GM12878 (cell line): ENCODE measurements at regions of chr2 and their contacts with region 1.

Region 1: GRCh38 chr2:222451224-222451674 is 26.9 kb downstream of the SGPP2 start:
- DNase-seq: peak; percentile 77
- ATAC-seq: peak; percentile 100
- H3K4me3 ChIP-seq: no peak overlapping the region
- H3K27ac ChIP-seq: no peak overlapping the region
- H3K4me1 ChIP-seq: peaks cover 9% of the 10 kb centered on the region
- H3K27me3 ChIP-seq: no peaks in the 10 kb centered on the region
- CTCF ChIP-seq: peak; percentile 23 to 57 (median 42); a peak in 5 of 6 replicates
- EP300 ChIP-seq: peak; percentile 62 to 66; a peak in 2 of 4 replicates
- POLR2A ChIP-seq: no peak
- RAD21 ChIP-seq: peak; percentile 54

Region 2: DNA sequence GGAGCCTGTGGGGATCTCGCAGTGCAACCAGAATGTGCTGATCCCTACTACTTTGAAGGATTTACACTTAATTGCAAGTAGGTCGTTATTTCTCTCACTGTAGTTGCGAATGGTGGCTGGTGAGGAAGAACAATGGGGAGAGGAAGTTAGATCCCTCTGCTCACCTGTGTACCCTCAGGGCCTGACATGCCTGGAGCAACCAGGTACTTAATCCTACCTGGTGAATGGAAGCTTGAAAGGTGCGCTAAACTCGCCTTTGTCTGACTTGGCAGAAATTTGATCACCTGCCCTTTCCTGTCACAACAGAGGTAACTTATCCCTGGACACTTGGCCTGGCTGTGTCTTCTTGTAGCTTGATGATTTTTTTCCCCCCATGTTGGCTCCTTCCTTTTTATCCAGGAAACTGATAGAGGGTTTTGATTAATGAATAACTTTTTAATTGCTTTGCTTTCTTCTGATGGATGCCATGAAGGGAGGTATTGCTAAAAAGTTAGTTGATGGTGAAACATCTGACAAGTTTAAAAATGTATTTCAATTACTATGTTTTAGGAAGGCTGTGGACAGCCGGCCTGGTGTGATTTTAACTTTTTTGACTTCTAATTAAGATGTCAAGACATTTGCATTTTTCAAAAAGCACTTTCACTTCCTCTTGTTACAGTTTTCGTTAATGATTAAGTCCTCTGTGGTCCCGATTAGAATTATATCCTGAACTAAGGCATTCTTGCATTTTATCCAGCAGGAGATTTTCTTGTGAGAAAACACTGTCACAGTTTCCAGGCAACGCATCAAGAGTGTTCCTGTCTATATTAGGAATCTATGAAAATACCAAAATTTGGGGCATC is 17.7 kb before region 1 on chr2:
- CTCF ChIA-PET with region 1: interaction called, 7 read pairs
- POLR2A ChIA-PET with region 1: interaction called, 5 read pairs
- RAD21 ChIA-PET with region 1: interaction called, 4 read pairs
- SMC1A ChIA-PET with region 1: interaction called, 47 read pairs
- in situ Hi-C with region 1: no loop called
- intact Hi-C with region 1: no loop called
- DNase-seq: no peak
- ATAC-seq: peak; percentile 77
- H3K4me3 ChIP-seq: peak overlapping the region; percentile 37; the same call in 1 of the 2 replicates
- H3K27ac ChIP-seq: peak overlapping the region; percentile 65
- H3K4me1 ChIP-seq: peaks cover 33% of the 10 kb centered on the region
- H3K27me3 ChIP-seq: no peaks in the 10 kb centered on the region
- CTCF ChIP-seq: no peak
- EP300 ChIP-seq: peak; percentile 46 to 81; a peak in 2 of 4 replicates
- POLR2A ChIP-seq: no peak
- RAD21 ChIP-seq: no peak